ENCODE measurements at regions of chr16 and their contacts with region 1.

Region 1: GRCh38 chr16:30557957-30558788 is at the start of gene ZNF764:
- DNase-seq: peak; percentile 99
- ATAC-seq: peak; percentile 96
- H3K4me3 Mint-ChIP-seq: peak within 1 kb of the TSS; percentile 85
- H3K27ac Mint-ChIP-seq: peak within 1 kb of the TSS; percentile 94
- H3K4me1 Mint-ChIP-seq: peaks cover 44% of the 10 kb centered on the region
- H3K27me3 Mint-ChIP-seq: no peaks in the 10 kb centered on the region
- total RNA-seq, gene ZNF764: 8.0 to 11.2 TPM

Region 2: GRCh38 chr16:30335598-30336474 is 222.3 kb before region 1 on chr16:
- CTCF ChIA-PET with region 1: no interaction called
- POLR2A ChIA-PET with region 1: no interaction called
- intact Hi-C with region 1: loop called in 1 of 2 experiments (anchors 1 kb)
- DNase-seq: peak; percentile 55
- ATAC-seq: peak; percentile 13
- H3K4me3 Mint-ChIP-seq: peak overlapping the region; percentile 87
- H3K27ac Mint-ChIP-seq: peak overlapping the region; percentile 73
- H3K4me1 Mint-ChIP-seq: peaks cover 22% of the 10 kb centered on the region
- H3K27me3 Mint-ChIP-seq: no peaks in the 10 kb centered on the region

Region 3: DNA sequence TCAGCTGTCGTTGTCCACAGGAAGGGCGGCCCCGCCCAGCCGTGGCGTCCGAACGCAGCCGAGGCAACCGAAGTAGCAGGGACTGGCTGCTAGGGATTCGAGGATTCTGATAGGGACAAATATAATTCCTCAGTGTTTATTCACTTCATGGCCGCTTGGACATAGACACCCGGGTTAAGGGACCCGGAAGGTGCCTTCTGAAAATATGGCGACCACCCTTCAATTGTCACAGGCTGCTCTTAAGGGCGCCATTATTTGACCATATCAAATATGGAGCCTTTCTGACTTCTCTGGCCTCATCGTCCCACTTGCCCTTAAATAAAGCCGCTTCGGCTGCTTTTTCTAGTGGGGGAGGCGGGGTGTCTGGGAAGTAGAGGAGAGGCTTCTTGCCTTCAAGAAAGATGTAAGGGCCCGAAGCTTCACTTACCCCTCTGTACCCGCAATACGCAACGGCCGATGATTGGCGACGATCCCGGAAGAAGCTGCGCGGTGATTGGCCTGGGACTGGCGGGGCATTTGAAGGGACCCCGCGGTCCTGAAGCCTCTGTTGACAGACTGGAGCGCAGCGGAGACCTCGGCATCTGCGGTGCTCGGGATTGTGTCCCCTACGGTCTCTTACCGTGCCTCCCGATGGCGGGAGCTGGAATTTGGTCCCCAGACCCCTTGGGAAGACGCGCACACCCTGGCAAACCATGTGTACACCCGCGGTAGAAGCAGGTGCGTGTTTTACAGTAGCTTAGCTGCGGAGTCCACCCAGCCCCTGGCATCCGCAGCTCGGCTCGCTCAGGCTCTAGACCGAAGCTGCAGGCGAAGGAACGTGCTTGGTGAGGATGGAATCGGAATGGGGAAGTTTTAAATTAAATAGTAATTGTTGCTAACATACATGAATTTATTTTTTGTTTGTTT is 13.8 kb after region 1 on chr16 and contains the start of gene ZNF688:
- CTCF ChIA-PET with region 1: interaction called, 8 read pairs
- POLR2A ChIA-PET with region 1: interaction called, 21 read pairs
- intact Hi-C with region 1: loop called (anchors 1 kb)
- DNase-seq: peak; percentile 95
- ATAC-seq: peak; percentile 79
- H3K4me3 Mint-ChIP-seq: peak within 1 kb of the TSS; percentile 87
- H3K27ac Mint-ChIP-seq: peak within 1 kb of the TSS; percentile 93
- H3K4me1 Mint-ChIP-seq: peaks cover 57% of the 10 kb centered on the region
- H3K27me3 Mint-ChIP-seq: no peaks in the 10 kb centered on the region
- total RNA-seq, gene ZNF688: 7.1 to 9.1 TPM

Region 4: GRCh38 chr16:30602616-30603277 is 44.6 kb after region 1 on chr16:
- CTCF ChIA-PET with region 1: interaction called, 6 read pairs
- POLR2A ChIA-PET with region 1: no interaction called
- intact Hi-C with region 1: loop called in 1 of 2 experiments (anchors 1 kb)
- DNase-seq: no peak
- ATAC-seq: no peak
- H3K4me3 Mint-ChIP-seq: no peak overlapping the region
- H3K27ac Mint-ChIP-seq: no peak overlapping the region
- H3K4me1 Mint-ChIP-seq: peaks cover 7% of the 10 kb centered on the region
- H3K27me3 Mint-ChIP-seq: no peaks in the 10 kb centered on the region

Region 5: DNA sequence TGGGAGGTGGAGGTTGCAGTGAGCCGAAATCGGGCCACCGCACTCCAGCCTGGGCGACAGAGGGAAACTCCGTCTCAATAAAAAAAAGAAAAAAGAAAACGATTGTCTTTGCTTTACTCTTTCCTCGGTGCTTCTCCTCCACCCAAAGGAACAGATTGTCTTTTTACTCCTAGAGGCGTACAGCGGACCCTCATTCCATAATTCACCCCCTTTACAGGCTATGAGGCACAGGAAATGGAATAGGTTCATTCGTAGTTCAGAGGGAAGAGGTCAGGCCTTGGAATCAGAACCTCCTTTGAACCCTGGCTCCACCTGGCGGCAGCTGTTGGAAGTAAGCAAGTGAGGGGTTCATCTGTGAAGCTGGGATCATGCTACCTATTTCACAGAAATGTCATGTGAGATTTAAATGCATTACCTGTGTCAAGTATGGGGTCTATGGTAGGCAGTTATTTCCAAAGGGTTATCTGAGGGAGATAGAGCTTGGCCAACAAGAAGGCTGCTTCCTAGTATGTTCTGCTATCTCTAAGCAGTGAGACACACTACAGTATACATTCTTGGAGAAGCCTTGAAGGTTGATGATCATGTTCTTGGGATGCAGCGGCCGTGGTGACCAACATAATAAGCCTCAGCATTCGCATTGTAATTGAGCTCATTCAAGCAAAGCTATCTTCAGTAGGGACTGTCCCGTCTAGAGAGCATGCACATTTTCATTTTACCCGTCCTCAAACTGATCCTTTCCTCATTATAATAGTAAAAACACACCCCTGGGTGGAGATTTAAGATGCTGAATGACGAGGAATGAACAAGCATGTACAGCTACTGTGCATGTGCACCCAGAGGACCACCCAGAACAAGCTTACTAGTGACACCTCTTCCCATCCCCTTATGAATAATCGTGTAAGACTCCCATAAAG is 70.7 kb after region 1 on chr16:
- CTCF ChIA-PET with region 1: interaction called, 5 read pairs
- POLR2A ChIA-PET with region 1: interaction called, 3 read pairs
- intact Hi-C with region 1: loop called in 1 of 2 experiments (anchors 1 kb)
- DNase-seq: peak; percentile 95
- ATAC-seq: peak; percentile 93
- H3K4me3 Mint-ChIP-seq: peak overlapping the region; percentile 58
- H3K27ac Mint-ChIP-seq: peak overlapping the region; percentile 82
- H3K4me1 Mint-ChIP-seq: peaks cover 14% of the 10 kb centered on the region
- H3K27me3 Mint-ChIP-seq: no peaks in the 10 kb centered on the region

Measured in activated CD4-positive, alpha-beta T cell treated with anti-CD3 and anti-CD28 coated beads for 36 hours (primary cell).